ENCODE measurements at regions of chr2 and their contacts with region 1.

Region 1: GRCh38 chr2:70248181-70248847 is at the start of gene TIA1:
- DNase-seq: peak; percentile 100
- ATAC-seq: peak; percentile 99
- total RNA-seq, gene TIA1: 49.1 TPM

Region 2: DNA sequence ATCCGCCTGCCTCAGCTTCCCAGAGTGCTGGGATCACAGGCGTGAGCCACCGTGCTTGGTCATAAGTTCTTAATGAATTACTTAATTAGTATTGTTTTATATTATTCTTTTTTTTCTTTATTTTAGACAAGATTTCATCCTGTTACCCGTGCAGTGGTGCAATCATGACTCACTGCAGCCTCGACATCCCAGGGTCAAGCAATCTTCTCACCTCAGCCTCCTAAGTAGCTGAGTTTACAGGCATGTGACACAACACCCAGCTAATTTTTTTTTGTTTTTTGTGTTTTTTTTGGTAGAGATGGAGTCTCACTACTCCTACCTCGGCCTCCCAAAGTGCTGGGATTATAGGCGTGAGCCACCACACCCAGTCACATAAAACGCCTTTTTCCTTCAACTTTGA is 74.8 kb before region 1 on chr2:
- intact Hi-C with region 1: no loop called
- DNase-seq: no peak
- ATAC-seq: no peak

Region 3: GRCh38 chr2:70190418-70191243 is 57.7 kb before region 1 on chr2 and contains the start of gene C2orf42:
- intact Hi-C with region 1: loop called (anchors 1 kb)
- DNase-seq: peak; percentile 96
- ATAC-seq: peak; percentile 98
- total RNA-seq, gene C2orf42: 14.1 TPM